ENCODE measurements at regions of chr19 and their contacts with region 1.

Region 1: GRCh38 chr19:42132851-42133528 is 744 bp upstream of the POU2F2 start:
- DNase-seq: peak; percentile 79
- H3K4me3 Mint-ChIP-seq: peak overlapping the region; percentile 79
- H3K27ac Mint-ChIP-seq: peak overlapping the region; percentile 86
- H3K4me1 Mint-ChIP-seq: peaks cover 58% of the 10 kb centered on the region
- H3K27me3 Mint-ChIP-seq: no peaks in the 10 kb centered on the region

Region 2: DNA sequence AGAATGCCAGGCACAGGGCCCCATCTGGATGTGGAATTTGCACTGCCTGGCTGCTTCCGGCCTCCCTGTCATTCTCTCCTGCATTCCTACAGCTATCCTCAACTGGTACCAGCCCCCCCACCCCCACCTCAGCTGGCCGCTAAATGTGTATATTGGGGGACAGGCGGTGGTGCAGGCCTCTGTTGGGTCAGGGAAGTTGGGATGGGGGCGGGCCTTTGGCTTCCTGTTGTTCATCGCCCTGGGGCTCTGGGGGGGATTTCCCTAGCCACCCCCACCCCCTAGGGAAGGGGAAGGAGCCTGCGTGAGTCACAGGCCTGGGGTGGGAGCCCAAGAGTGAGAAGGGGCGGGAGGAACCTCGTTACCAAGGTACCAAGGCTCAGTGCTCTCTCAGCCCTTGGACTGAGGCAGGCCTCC is 11.3 kb before region 1 on chr19:
- CTCF ChIA-PET with region 1: interaction called, 19 read pairs
- intact Hi-C with region 1: loop called (anchors 1 kb)
- DNase-seq: peak; percentile 97
- H3K4me3 Mint-ChIP-seq: peak overlapping the region; percentile 76
- H3K27ac Mint-ChIP-seq: peak overlapping the region; percentile 98
- H3K4me1 Mint-ChIP-seq: peaks cover 54% of the 10 kb centered on the region
- H3K27me3 Mint-ChIP-seq: no peaks in the 10 kb centered on the region

Region 3: GRCh38 chr19:42199440-42200115 is 66.6 kb after region 1 on chr19:
- CTCF ChIA-PET with region 1: interaction called, 3 read pairs
- intact Hi-C with region 1: loop called (anchors 1 kb)
- DNase-seq: peak; percentile 88
- H3K4me3 Mint-ChIP-seq: peak overlapping the region; percentile 58
- H3K27ac Mint-ChIP-seq: peak overlapping the region; percentile 96
- H3K4me1 Mint-ChIP-seq: peaks cover 79% of the 10 kb centered on the region
- H3K27me3 Mint-ChIP-seq: no peaks in the 10 kb centered on the region

Region 4: DNA sequence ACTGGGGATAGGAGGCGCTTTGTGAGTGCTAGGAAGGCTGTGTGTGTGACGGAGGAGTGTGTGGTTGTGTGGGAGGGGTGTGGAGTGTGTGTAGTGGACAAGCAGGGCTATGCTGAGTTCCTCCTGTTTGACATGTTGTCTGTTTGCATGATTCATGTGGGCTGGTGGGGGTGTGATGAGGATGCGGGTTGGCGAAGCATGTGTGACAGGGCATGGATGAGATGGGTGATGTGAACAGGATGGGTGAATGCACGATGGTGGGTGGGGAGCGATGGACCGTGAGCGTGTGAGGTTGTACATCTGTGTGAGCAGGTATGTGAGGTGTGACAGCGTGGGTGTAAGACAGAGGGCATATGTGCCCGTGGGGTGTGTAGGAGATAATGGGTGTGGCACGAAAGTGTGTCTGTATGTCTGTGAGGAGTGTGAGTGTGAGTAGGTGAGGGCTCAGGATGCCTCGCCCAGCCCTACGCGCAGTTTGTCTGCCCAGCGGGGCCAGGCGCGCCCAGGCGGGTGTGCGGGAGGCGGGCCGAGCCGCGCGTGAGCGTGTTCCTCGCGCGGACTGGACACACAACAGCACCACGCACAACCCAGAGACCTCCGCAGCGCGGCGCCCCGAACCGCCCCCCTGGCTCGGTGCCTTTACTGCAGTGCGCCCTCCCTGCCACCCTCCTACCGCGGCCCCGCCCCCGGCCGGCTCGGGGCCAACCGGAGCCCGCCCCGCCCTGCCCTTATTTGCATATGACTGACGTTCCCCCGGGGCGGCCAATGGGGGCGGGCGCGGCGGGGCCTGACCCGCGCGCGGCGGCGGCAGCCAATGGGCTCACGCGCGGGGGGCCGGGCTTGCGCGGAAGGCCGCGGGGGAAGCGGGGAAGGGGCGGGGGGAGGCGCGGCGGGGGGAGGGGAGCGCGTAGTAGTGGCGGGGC is 150.4 kb after region 1 on chr19:
- CTCF ChIA-PET with region 1: interaction called, 9 read pairs
- intact Hi-C with region 1: loop called (anchors 1 kb)
- DNase-seq: peak; percentile 96
- H3K4me3 Mint-ChIP-seq: peak overlapping the region; percentile 7
- H3K27ac Mint-ChIP-seq: no peak overlapping the region
- H3K4me1 Mint-ChIP-seq: peaks cover 45% of the 10 kb centered on the region
- H3K27me3 Mint-ChIP-seq: no peaks in the 10 kb centered on the region

Region 5: GRCh38 chr19:42396381-42397262 is 263.6 kb after region 1 on chr19:
- CTCF ChIA-PET with region 1: interaction called, 3 read pairs
- intact Hi-C with region 1: loop called (anchors 2 kb)
- DNase-seq: peak; percentile 98
- H3K4me3 Mint-ChIP-seq: peak overlapping the region; percentile 89
- H3K27ac Mint-ChIP-seq: peak overlapping the region; percentile 88
- H3K4me1 Mint-ChIP-seq: peaks cover 32% of the 10 kb centered on the region
- H3K27me3 Mint-ChIP-seq: no peaks in the 10 kb centered on the region